ENCODE measurements at regions of chr19 and their contacts with region 1.

Region 1: GRCh38 chr19:23249911-23250649 is at the start of gene ZNF724:
- DNase-seq: peak; percentile 84 to 96
- ATAC-seq: peak; percentile 99
- H3K4me3 ChIP-seq: peak within 1 kb of the TSS; percentile 63
- H3K27ac ChIP-seq: peak within 1 kb of the TSS; percentile 59 to 78
- H3K4me1 ChIP-seq: no peaks in the 10 kb centered on the region
- CTCF ChIP-seq: no peak
- EP300 ChIP-seq: no peak
- POLR2A ChIP-seq: no peak; the same call in 1 of the 2 replicates
- RAD21 ChIP-seq: no peak
- polyA plus RNA-seq, gene ZNF724: 1.8 and 1.9 TPM in 2 replicates

Region 2: DNA sequence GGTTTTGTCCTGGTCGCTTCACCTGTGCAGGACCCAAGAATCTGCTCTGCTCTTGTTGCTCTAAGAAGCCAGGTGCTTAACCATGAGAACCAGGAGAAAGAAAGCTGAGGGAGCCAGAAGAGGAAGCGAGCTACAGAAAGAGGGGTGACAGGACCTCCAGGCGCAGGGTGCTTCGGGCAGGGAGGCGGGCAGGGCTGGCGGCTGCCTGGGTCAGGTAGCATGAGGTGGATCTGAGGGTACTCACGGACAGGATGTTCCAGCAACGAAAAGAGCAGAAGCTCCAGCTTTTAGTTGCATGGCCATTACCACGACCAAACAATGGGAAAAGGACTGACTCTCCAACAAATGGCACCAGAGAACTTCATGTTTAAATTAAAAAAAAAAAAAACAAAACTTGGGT is 59.7 kb before region 1 on chr19:
- CTCF ChIA-PET with region 1: no interaction called
- POLR2A ChIA-PET with region 1: no interaction called
- DNase-seq: no peak
- ATAC-seq: no peak
- H3K4me3 ChIP-seq: no peak overlapping the region
- H3K27ac ChIP-seq: no peak overlapping the region
- H3K4me1 ChIP-seq: no peaks in the 10 kb centered on the region
- CTCF ChIP-seq: no peak
- EP300 ChIP-seq: no peak
- POLR2A ChIP-seq: no peak
- RAD21 ChIP-seq: no peak

Region 3: GRCh38 chr19:23273590-23274413 is 23.7 kb after region 1 on chr19:
- CTCF ChIA-PET with region 1: no interaction called
- POLR2A ChIA-PET with region 1: interaction called, 20 read pairs
- DNase-seq: peak; percentile 53 to 82
- ATAC-seq: peak; percentile 100
- H3K4me3 ChIP-seq: peak overlapping the region; percentile 62
- H3K27ac ChIP-seq: peak overlapping the region; percentile 34 to 63
- H3K4me1 ChIP-seq: no peaks in the 10 kb centered on the region
- CTCF ChIP-seq: no peak
- EP300 ChIP-seq: no peak
- POLR2A ChIP-seq: peak; percentile 30
- RAD21 ChIP-seq: no peak

Region 4: DNA sequence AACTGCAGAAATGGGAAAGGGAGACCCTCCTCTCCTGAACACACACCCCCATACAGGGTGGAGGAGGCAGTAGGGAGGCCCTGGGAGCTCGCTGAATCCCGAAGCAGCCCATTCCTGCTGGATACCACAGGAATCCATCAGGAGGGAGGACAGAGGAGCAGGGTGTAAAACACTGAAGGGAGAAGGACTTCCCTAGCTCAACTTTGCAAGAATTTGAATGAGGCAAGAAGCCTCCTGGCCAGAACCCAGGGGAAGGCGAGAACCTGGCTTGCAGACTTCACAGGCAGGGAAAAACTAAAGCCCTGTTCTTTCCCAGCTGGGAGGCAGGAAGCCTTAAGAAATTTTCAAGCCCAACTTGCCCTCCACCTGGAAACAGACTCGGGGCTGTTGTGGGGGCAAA is 101.7 kb after region 1 on chr19:
- CTCF ChIA-PET with region 1: no interaction called
- POLR2A ChIA-PET with region 1: no interaction called
- DNase-seq: no peak
- ATAC-seq: no peak
- H3K4me3 ChIP-seq: no peak overlapping the region
- H3K27ac ChIP-seq: no peak overlapping the region
- H3K4me1 ChIP-seq: no peaks in the 10 kb centered on the region
- CTCF ChIP-seq: no peak
- EP300 ChIP-seq: no peak
- POLR2A ChIP-seq: no peak
- RAD21 ChIP-seq: no peak